ENCODE measurements at regions of chr1 and their contacts with region 1.

Region 1: GRCh38 chr1:109605381-109605780 is 14.0 kb downstream of the GNAT2 start:
- DNase-seq: no peak
- H3K4me3 ChIP-seq: no peak overlapping the region
- H3K27ac ChIP-seq: no peak overlapping the region
- H3K4me1 ChIP-seq: peaks cover 0 to 7% (median 1%) of the 10 kb centered on the region in 4 experiments
- H3K27me3 ChIP-seq: no peaks in the 10 kb centered on the region

Region 2: GRCh38 chr1:109630081-109630897 is 24.9 kb after region 1 on chr1:
- CTCF ChIA-PET with region 1: interaction called, 90 read pairs
- POLR2A ChIA-PET with region 1: no interaction called
- DNase-seq: peak in 2 of 3 donors; percentile 51 to 53
- H3K4me3 ChIP-seq: no peak overlapping the region
- H3K27ac ChIP-seq: no peak overlapping the region
- H3K4me1 ChIP-seq: peaks cover 0 to 9% (median 6%) of the 10 kb centered on the region in 4 experiments
- H3K27me3 ChIP-seq: no peaks in the 10 kb centered on the region